Mammary epithelial cell (primary cell): ENCODE measurements at regions of chr7 and their contacts with region 1.

Region 1: GRCh38 chr7:816300-816750 is 16.0 kb upstream of the SUN1 start:
- DNase-seq: peak; percentile 98
- H3K4me3 ChIP-seq: peak overlapping the region in 2 of 3 experiments; percentile 67 to 84
- H3K27ac ChIP-seq: no peak overlapping the region
- H3K4me1 ChIP-seq: peaks cover 23% of the 10 kb centered on the region
- H3K27me3 ChIP-seq: no peaks in the 10 kb centered on the region
- CTCF ChIP-seq: no peak

Region 2: DNA sequence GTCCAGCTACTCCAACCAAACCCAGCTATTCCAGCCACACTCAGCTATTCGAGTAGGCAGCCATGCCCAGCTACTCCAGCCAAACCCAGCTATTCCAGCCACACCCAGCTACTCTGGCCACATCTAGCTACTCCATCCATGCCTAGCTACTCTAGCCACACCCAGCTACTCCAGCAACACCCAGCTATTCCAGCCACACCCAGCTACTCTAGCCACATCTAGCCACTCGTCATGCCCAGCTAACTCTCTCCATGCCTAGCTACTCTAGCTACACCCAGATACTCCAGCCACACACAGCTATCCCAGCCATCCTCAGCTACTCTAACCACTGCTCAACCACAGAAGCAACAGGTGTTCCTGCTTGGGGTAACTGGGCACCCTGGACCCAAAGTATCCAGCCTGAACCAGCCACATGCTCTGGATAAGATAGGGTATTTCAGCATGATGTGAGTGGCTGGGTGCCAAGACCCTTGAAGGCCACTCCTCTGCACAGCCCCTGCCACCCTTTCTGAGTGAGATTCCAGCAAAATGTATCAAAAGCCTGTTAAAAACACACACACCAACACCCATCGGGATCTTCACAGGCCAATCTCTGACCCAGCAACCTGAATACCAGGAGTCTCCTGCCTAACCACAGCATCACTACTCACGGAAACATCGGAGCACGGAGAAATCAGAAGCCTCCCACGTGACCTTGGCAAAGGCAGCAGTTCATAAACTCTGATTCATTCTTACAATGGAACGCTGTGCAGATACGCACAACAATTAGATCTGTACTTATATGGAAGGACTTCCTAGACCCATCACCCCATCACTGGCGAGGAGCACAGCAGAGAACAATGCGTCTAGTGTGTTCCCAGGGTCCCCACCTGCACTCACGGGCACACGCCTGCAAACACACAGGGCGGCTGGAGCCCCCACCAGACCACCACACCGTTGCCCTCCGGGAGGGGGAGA is 141.6 kb before region 1 on chr7:
- CTCF ChIA-PET with region 1: no interaction called
- dilution Hi-C with region 1: no loop called
- in situ Hi-C with region 1: no loop called
- intact Hi-C with region 1: no loop called
- DNase-seq: peak; percentile 91
- H3K4me3 ChIP-seq: no peak overlapping the region
- H3K27ac ChIP-seq: peak overlapping the region; percentile 53
- H3K4me1 ChIP-seq: peaks cover 11% of the 10 kb centered on the region
- H3K27me3 ChIP-seq: no peaks in the 10 kb centered on the region
- CTCF ChIP-seq: no peak

Region 3: GRCh38 chr7:732094-732541 is 84.2 kb before region 1 on chr7:
- CTCF ChIA-PET with region 1: no interaction called
- dilution Hi-C with region 1: loop called (anchors 5 kb)
- in situ Hi-C with region 1: no loop called
- intact Hi-C with region 1: no loop called
- DNase-seq: no peak
- H3K4me3 ChIP-seq: no peak overlapping the region
- H3K27ac ChIP-seq: no peak overlapping the region
- H3K4me1 ChIP-seq: peaks cover 9% of the 10 kb centered on the region
- H3K27me3 ChIP-seq: no peaks in the 10 kb centered on the region
- CTCF ChIP-seq: no peak

Region 4: DNA sequence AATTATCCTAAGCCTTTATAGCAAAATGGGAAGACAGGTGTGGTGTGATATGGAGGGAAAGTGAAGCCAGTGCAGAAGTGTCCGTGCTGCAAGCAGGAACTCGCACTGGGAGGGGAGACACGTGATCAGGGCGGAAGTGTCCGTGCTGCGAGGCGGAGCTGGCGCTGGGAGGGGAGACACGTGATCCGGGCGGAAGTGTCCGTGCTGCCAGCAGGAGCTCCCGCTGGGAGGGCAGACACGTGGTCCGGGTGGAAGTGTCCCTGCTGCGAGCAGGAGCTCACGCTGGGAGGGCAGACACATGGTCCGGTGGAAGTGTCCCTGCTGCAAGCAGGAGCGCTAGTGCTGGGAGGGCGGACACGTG is 48.8 kb before region 1 on chr7:
- CTCF ChIA-PET with region 1: no interaction called
- dilution Hi-C with region 1: no loop called
- in situ Hi-C with region 1: no loop called
- intact Hi-C with region 1: no loop called
- DNase-seq: peak; percentile 11
- H3K4me3 ChIP-seq: no peak overlapping the region
- H3K27ac ChIP-seq: no peak overlapping the region
- H3K4me1 ChIP-seq: peaks cover 5% of the 10 kb centered on the region
- H3K27me3 ChIP-seq: no peaks in the 10 kb centered on the region
- CTCF ChIP-seq: no peak

Region 5: GRCh38 chr7:786472-787255 is 29.7 kb before region 1 on chr7:
- CTCF ChIA-PET with region 1: no interaction called
- dilution Hi-C with region 1: no loop called
- in situ Hi-C with region 1: no loop called
- intact Hi-C with region 1: loop called (anchors 2 kb)
- DNase-seq: peak; percentile 34
- H3K4me3 ChIP-seq: no peak overlapping the region
- H3K27ac ChIP-seq: no peak overlapping the region
- H3K4me1 ChIP-seq: no peaks in the 10 kb centered on the region
- H3K27me3 ChIP-seq: no peaks in the 10 kb centered on the region
- CTCF ChIP-seq: peak; percentile 80 to 97

Region 6: DNA sequence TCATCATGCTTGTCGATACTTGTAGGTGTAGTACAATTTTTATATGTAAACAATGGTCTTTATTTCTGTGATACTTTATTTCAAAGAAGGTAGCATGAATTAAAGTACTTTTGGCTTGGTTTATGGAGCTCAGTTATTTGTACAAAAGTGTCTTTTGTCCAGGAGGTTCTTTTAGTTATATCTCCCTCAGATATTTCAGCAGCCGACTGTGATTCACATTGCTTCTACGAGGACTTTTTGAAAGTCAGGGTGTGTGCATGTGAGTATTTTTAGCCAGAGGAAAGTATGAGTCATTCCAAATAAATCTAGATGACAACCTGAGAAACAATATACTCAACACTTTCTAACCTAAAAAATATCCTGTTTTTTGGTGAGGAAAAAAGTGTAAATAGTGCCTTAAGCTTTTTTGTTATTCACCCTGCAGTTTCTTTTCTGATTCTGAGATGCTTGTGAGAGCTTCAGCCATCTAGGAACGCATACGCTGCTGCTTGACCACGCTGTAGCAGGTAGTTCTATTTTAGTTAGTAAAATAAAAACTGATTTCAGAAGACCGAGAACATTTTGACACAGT is 15.4 kb after region 1 on chr7:
- CTCF ChIA-PET with region 1: interaction called, 7 read pairs
- dilution Hi-C with region 1: no loop called
- in situ Hi-C with region 1: no loop called
- intact Hi-C with region 1: loop called (anchors 1 kb)
- DNase-seq: peak; percentile 93
- H3K4me3 ChIP-seq: peak overlapping the region in 2 of 3 experiments; percentile 36 to 41
- H3K27ac ChIP-seq: peak overlapping the region; percentile 100
- H3K4me1 ChIP-seq: peaks cover 50% of the 10 kb centered on the region
- H3K27me3 ChIP-seq: no peaks in the 10 kb centered on the region
- CTCF ChIP-seq: no peak

Region 7: DNA sequence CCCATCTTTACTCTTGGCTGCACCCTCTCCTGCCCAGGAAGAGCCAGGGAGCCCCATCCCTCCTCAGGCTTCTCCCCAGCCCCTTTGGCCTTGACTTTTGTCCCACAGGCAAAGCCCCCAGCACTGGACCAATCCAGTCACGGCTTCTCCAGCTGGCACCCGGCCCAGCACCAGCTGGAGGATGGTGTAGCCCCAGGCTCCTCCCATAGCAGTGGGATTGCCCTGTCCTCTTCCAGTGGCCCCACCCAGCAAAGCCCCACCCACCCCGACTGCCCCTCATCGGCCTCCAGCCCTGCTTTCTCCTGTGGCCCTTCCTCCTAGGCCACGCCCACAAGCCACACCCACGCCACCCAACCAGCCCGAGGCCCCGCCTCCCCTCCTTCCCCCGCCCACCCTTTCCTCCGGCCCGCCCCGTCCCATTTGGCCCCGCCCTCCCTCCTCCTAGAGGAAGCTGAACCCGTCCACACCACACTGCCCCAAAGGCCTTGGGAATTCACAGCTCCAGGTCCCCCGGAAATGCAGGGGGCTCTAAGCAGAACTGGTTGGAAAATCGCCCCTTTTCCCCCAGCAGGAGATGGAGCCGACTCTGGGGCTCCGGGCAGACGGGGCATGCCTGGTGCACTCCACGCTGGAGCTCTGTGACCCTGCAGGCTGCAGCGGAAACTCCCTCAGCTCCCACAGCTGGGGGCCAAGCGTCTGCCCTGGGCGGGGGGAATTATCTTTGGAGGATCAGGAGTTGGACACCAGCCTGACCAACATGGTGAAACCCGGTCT is 85.2 kb after region 1 on chr7:
- CTCF ChIA-PET with region 1: no interaction called
- dilution Hi-C with region 1: loop called (anchors 10 kb)
- in situ Hi-C with region 1: no loop called
- intact Hi-C with region 1: no loop called
- DNase-seq: peak; percentile 57
- H3K4me3 ChIP-seq: no peak overlapping the region
- H3K27ac ChIP-seq: no peak overlapping the region
- H3K4me1 ChIP-seq: peaks cover 3% of the 10 kb centered on the region
- H3K27me3 ChIP-seq: no peaks in the 10 kb centered on the region
- CTCF ChIP-seq: no peak

Region 8: DNA sequence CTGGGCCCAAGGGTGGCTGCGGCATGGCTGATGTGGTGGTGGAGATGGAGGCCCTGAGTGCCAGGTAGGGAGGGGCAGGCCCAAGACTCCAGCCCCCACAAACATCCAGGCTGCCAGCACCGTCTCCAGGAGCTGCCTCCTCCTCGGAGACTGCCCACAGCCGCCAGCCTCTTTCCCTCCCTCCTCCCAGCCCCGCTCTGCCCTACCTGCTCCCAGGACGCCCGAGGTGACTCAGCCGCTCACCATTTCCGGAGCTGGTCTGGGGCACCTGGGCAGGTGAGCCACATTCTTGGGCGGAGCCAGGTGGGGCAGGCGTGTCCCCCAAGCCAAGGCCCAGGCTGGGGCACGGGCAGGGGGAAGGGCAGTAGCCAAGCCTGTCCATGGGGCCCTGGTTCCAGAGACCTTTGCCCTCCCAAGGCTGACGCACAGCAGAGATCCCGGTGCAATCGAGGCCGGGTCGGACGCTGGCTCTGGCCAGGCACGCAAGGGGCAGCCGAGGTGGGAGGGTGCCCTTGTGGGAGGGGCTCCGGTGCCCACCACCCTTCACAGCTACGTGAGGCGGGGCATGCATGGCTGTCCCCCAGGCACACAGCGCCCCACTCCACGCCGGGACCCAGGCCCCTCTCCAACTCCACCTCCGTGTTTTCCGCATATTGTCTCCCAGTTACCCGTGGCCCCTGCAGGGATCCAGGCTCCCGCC is 129.4 kb after region 1 on chr7:
- CTCF ChIA-PET with region 1: no interaction called
- dilution Hi-C with region 1: no loop called
- in situ Hi-C with region 1: no loop called
- intact Hi-C with region 1: loop called (anchors 10 kb)
- DNase-seq: peak; percentile 98
- H3K4me3 ChIP-seq: peak overlapping the region in 2 of 3 experiments; percentile 11 to 31
- H3K27ac ChIP-seq: peak overlapping the region; percentile 69
- H3K4me1 ChIP-seq: peaks cover 34% of the 10 kb centered on the region
- H3K27me3 ChIP-seq: no peaks in the 10 kb centered on the region
- CTCF ChIP-seq: no peak

Region 9: GRCh38 chr7:974820-975681 is 158.7 kb after region 1 on chr7 and contains the start of gene COX19:
- CTCF ChIA-PET with region 1: no interaction called
- dilution Hi-C with region 1: loop called (anchors 10 kb)
- in situ Hi-C with region 1: no loop called
- intact Hi-C with region 1: no loop called
- DNase-seq: peak; percentile 80
- H3K4me3 ChIP-seq: peak within 1 kb of the TSS; percentile 54 to 100 (median 88)
- H3K27ac ChIP-seq: peak within 1 kb of the TSS; percentile 85
- H3K4me1 ChIP-seq: peaks cover 12% of the 10 kb centered on the region
- H3K27me3 ChIP-seq: no peaks in the 10 kb centered on the region
- CTCF ChIP-seq: no peak
- total RNA-seq, gene COX19: 11.2 to 15.9 TPM

Region 10: GRCh38 chr7:1340461-1341360 is 524.4 kb after region 1 on chr7:
- CTCF ChIA-PET with region 1: no interaction called
- dilution Hi-C with region 1: no loop called
- in situ Hi-C with region 1: no loop called
- intact Hi-C with region 1: no loop called
- DNase-seq: no peak
- H3K4me3 ChIP-seq: no peak overlapping the region
- H3K27ac ChIP-seq: no peak overlapping the region
- H3K4me1 ChIP-seq: no peaks in the 10 kb centered on the region
- H3K27me3 ChIP-seq: no peaks in the 10 kb centered on the region
- CTCF ChIP-seq: no peak